Heart left ventricle (tissue), 16 donors: ENCODE measurements at regions of chr4 and their contacts with region 1.

Region 1: GRCh38 chr4:13548984-13549546 is 4.8 kb upstream of the NKX3-2 start:
- DNase-seq: peak; percentile 61 to 89 (median 74)
- ATAC-seq: peak; percentile 61 to 85 (median 82)
- H3K4me3 ChIP-seq: peak overlapping the region in 9 of 12 donors; percentile 10 to 43 (median 22)
- H3K27ac ChIP-seq: no peak overlapping the region
- H3K4me1 ChIP-seq: peaks cover 0 to 37% (median 24%) of the 10 kb centered on the region in 12 donors
- H3K27me3 ChIP-seq: peaks cover 40 to 88% (median 69%) of the 10 kb centered on the region in 9 donors
- CTCF ChIP-seq: peak; percentile 73 to 96 (median 90)
- POLR2A ChIP-seq: no peak

Region 2: DNA sequence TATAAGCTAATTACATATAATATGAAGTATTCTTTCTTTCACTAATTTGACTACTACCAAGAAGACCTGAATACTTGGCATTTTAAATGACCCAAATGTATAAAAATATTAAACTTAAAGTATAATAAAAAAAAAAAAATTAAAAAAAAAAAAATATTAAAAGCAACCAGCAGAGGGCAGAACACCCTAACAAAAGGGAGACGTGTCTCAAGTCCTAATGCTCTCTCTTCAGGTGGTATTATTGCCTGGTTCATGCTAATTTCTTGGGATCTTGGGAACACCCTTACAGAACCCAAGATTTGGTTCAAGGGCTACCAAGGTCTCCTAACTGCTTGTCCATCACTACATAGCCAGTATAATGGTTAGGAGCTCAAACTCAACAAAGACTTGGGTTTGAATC is 819.7 kb before region 1 on chr4:
- intact Hi-C with region 1: loop called (anchors 2 to 5 kb)
- DNase-seq: no peak
- ATAC-seq: no peak
- H3K4me3 ChIP-seq: no peak overlapping the region
- H3K27ac ChIP-seq: no peak overlapping the region
- H3K4me1 ChIP-seq: no peaks in the 10 kb centered on the region
- H3K27me3 ChIP-seq: peaks cover 0 to 9% (median 0%) of the 10 kb centered on the region in 9 donors
- CTCF ChIP-seq: peak; percentile 23 to 55 (median 48)
- POLR2A ChIP-seq: no peak

Region 3: DNA sequence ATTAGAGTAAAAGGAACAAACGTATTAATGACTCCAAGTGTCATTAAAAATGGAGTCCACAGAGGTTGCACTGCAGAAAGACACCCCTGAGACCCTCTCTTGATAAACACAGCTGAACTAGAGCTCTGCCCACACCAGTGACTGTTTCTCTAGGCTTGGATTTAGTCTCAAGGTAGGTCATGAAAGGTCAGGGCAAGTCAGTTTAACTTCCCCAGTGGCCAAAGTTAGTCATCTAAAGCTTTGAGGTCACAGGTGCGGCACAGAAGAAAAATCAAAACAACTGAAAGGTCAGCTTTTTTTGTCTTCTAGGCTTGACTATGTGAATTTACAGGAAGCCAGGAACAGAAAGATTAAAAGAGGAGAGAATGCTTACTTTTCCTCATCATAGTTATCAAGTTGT is 814.5 kb before region 1 on chr4:
- intact Hi-C with region 1: loop called (anchors 2 to 5 kb)
- DNase-seq: no peak
- ATAC-seq: no peak
- H3K4me3 ChIP-seq: no peak overlapping the region
- H3K27ac ChIP-seq: no peak overlapping the region
- H3K4me1 ChIP-seq: no peaks in the 10 kb centered on the region
- H3K27me3 ChIP-seq: peaks cover 0 to 4% (median 0%) of the 10 kb centered on the region in 9 donors
- CTCF ChIP-seq: no peak
- POLR2A ChIP-seq: no peak

Region 4: GRCh38 chr4:12852338-12853307 is 696.4 kb before region 1 on chr4:
- intact Hi-C with region 1: loop called in 8 of 10 experiments (anchors 1 to 2 kb)
- DNase-seq: peak in 1 of 5 donors; percentile 7
- ATAC-seq: peak in 3 of 4 donors; percentile 62 to 85 (median 82)
- H3K4me3 ChIP-seq: no peak overlapping the region
- H3K27ac ChIP-seq: no peak overlapping the region
- H3K4me1 ChIP-seq: peaks cover 0 to 4% (median 0%) of the 10 kb centered on the region in 12 donors
- H3K27me3 ChIP-seq: peaks cover 0 to 43% (median 3%) of the 10 kb centered on the region in 9 donors
- CTCF ChIP-seq: peak; percentile 42 to 74 (median 57)
- POLR2A ChIP-seq: no peak